ENCODE measurements at regions of chr2 and their contacts with region 1.

Region 1: GRCh38 chr2:18991177-18992168 is 366.9 kb downstream of the OSR1 start:
- DNase-seq: peak; percentile 88 to 99
- H3K4me3 ChIP-seq: peak overlapping the region; percentile 16; the same call in 1 of the 2 replicates
- H3K27ac ChIP-seq: peak overlapping the region; percentile 87
- H3K4me1 ChIP-seq: peaks cover 44% of the 10 kb centered on the region
- H3K27me3 ChIP-seq: no peaks in the 10 kb centered on the region
- CTCF ChIP-seq: no peak

Region 2: GRCh38 chr2:18824261-18824790 is 167.1 kb before region 1 on chr2:
- CTCF ChIA-PET with region 1: no interaction called
- POLR2A ChIA-PET with region 1: no interaction called
- intact Hi-C with region 1: loop called (anchors 1 kb)
- DNase-seq: peak; percentile 67 to 96
- H3K4me3 ChIP-seq: no peak overlapping the region
- H3K27ac ChIP-seq: peak overlapping the region; percentile 57
- H3K4me1 ChIP-seq: peaks cover 63% of the 10 kb centered on the region
- H3K27me3 ChIP-seq: no peaks in the 10 kb centered on the region
- CTCF ChIP-seq: peak; percentile 46; the same call in 1 of the 2 replicates

Region 3: GRCh38 chr2:19059064-19059463 is 67.6 kb after region 1 on chr2:
- CTCF ChIA-PET with region 1: no interaction called
- POLR2A ChIA-PET with region 1: no interaction called
- intact Hi-C with region 1: loop called (anchors 1 kb)
- DNase-seq: peak; percentile 72 to 84
- H3K4me3 ChIP-seq: no peak overlapping the region
- H3K27ac ChIP-seq: peak overlapping the region; percentile 39
- H3K4me1 ChIP-seq: peaks cover 19% of the 10 kb centered on the region
- H3K27me3 ChIP-seq: no peaks in the 10 kb centered on the region
- CTCF ChIP-seq: no peak

Region 4: GRCh38 chr2:19140596-19141219 is 149.2 kb after region 1 on chr2:
- CTCF ChIA-PET with region 1: interaction called, 3 read pairs
- POLR2A ChIA-PET with region 1: interaction called, 5 read pairs
- intact Hi-C with region 1: loop called (anchors 1 kb)
- DNase-seq: peak; percentile 83 to 100
- H3K4me3 ChIP-seq: no peak overlapping the region; the same call in 1 of the 2 replicates
- H3K27ac ChIP-seq: peak overlapping the region; percentile 88
- H3K4me1 ChIP-seq: peaks cover 48% of the 10 kb centered on the region
- H3K27me3 ChIP-seq: no peaks in the 10 kb centered on the region
- CTCF ChIP-seq: no peak

Region 5: DNA sequence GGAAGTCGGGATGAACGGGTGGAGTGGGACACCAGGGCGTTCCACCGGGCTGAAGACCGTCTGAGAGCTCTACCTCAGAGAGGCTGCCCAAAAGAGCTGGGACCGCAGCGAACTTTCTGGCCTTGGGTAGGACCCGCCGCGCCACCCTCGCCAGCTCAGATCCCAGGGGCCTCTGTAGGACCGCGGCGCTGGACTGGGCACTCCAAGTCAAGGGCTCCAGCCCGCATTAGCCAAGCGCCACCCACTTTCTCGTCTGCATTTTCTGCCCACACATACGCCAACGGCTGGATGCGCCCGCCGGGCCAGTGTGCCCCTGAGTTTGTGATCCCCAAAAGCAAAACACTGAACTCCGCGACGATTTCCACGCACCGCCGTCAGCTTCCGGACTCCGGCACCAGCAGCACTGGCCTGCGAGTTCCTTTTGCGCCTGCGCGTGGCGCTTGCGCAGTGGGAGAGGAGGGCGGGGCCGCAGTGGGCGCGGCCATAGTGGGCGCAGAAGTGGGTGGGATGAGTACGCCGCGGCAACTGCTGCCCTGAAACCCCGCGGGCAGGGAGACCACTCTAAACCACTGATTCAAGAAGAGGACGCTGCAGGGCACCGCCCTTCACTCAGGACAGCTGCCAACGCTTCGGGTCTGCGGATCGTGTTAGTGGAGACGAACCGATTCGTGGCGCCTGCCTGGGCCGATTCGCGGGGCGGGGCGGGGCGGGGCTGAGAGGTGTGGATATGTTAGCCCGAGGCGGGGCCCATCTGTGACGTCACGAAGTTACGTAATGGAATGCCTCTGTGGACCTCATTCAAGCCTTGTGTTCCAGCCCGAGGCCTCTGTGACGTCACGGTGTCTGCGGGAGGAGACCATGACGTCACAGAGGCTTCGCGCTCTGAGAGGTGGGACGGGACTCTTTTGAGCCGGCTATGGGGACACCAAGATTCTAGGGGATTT is 356.4 kb after region 1 on chr2:
- CTCF ChIA-PET with region 1: interaction called, 3 read pairs
- POLR2A ChIA-PET with region 1: no interaction called
- intact Hi-C with region 1: loop called (anchors 5 kb)
- DNase-seq: peak; percentile 86 to 97
- H3K4me3 ChIP-seq: peak overlapping the region; percentile 70
- H3K27ac ChIP-seq: peak overlapping the region; percentile 78
- H3K4me1 ChIP-seq: peaks cover 12% of the 10 kb centered on the region
- H3K27me3 ChIP-seq: no peaks in the 10 kb centered on the region
- CTCF ChIP-seq: no peak

Measured in PC-9 (cell line).